ENCODE measurements at regions of chrX and their contacts with region 1.

Region 1: GRCh38 chrX:123833387-123833786 is 26.5 kb upstream of the XIAP start:
- DNase-seq: peak; percentile 6 to 36
- ATAC-seq: peak; percentile 92 to 95
- H3K4me3 ChIP-seq: no peak overlapping the region
- H3K27ac ChIP-seq: peak overlapping the region in 1 of 4 donors; percentile 56
- H3K4me1 ChIP-seq: no peaks in the 10 kb centered on the region
- H3K27me3 ChIP-seq: no peaks in the 10 kb centered on the region
- CTCF ChIP-seq: peak; percentile 47 to 75 (median 71)
- POLR2A ChIP-seq: no peak

Region 2: DNA sequence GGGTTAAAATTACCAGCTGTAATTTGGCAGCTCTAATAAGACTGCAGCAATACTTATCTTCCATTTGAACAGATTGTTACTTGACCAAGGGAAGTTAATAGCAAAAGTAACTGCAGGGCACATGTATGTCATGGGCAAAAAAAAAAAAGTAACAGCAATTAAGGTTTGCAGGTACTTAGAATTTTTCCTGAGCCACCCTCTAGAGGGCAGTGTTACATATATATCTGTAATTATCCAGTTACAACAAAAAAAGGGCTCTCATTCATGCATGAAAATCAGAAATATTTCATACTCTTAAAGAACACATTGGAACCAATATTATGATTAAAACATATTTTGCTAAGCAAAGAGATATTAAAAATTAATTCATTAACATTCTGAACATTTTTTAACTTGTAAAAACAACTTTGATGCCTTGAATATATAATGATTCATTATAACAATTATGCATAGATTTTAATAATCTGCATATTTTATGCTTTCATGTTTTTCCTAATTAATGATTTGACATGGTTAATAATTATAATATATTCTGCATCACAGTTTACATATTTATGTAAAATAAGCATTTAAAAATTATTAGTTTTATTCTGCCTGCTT is 51.5 kb after region 1 on chrX:
- in situ Hi-C with region 1: no loop called
- intact Hi-C with region 1: loop called (anchors 10 kb)
- DNase-seq: no peak
- ATAC-seq: no peak
- H3K4me3 ChIP-seq: no peak overlapping the region
- H3K27ac ChIP-seq: no peak overlapping the region
- H3K4me1 ChIP-seq: no peaks in the 10 kb centered on the region
- H3K27me3 ChIP-seq: no peaks in the 10 kb centered on the region
- CTCF ChIP-seq: peak in 4 of 5 experiments; percentile 11 to 56 (median 37)
- POLR2A ChIP-seq: no peak

Region 3: GRCh38 chrX:123976706-123977316 is 143.4 kb after region 1 on chrX:
- in situ Hi-C with region 1: no loop called
- intact Hi-C with region 1: loop called (anchors 5 kb)
- DNase-seq: no peak
- ATAC-seq: peak; percentile 74 to 77
- H3K4me3 ChIP-seq: no peak overlapping the region
- H3K27ac ChIP-seq: peak overlapping the region; percentile 34 to 64 (median 51)
- H3K4me1 ChIP-seq: peaks cover 27 to 41% of the 10 kb centered on the region in 2 donors
- H3K27me3 ChIP-seq: no peaks in the 10 kb centered on the region
- CTCF ChIP-seq: peak in 4 of 5 experiments; percentile 5 to 36 (median 28)
- POLR2A ChIP-seq: no peak